ENCODE measurements at regions of chr11 and their contacts with region 1.

Region 1: GRCh38 chr11:64040684-64041322 is 5.1 kb downstream of the FLRT1 start:
- DNase-seq: no peak
- ATAC-seq: peak; percentile 62
- H3K4me3 ChIP-seq: no peak overlapping the region
- H3K27ac ChIP-seq: no peak overlapping the region
- H3K4me1 ChIP-seq: peaks cover 4% of the 10 kb centered on the region
- H3K27me3 ChIP-seq: no peaks in the 10 kb centered on the region
- CTCF ChIP-seq: peak; percentile 89; the same call in 1 of the 2 replicates

Region 2: DNA sequence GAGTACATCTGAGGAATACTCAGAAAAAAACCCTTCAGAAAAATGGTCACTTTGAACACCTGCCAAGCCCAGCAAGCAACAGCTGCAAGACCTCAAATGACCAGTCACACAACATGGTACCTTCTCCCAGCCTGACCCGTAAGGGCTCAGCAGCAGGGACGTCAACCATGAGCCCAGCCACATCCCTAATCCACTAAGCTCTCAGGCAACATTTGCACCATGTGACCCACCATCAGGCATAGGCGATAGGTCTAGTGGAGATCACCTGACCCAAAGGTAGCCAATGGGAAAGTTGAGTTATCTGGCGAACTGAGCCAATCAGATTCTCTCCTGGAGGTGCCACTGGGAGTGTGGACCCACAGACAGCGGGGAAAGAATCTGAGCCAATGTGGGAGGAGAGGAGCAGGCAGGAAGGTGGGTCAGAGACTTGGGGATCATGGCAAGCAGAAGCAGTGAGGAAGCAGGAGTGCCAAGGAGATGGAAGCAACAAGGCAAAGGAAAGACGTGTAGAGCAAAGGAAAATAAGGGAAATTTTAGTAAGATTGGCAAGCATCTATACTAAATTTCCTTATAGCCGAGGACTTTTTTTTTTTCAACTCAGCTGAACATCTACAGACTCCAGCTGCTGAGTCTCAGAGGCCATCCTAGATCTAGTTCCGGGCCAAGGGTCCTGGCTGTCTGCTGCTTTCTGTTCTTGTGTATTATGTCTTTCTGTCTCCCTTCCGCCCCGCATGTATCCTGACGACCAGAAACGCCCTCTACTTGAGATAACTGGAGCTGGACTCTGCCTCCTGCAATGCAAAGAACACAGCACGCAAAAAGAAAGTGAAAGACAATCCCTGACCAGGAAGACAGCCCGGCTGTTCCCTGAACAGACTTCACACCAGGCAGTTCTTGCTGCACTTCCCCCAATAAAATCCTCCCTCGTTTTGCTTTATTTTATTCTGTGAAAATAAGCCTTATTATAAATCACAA is 466.6 kb before region 1 on chr11:
- CTCF ChIA-PET with region 1: no interaction called
- POLR2A ChIA-PET with region 1: no interaction called
- in situ Hi-C with region 1: no loop called
- intact Hi-C with region 1: no loop called
- DNase-seq: no peak
- ATAC-seq: peak; percentile 92
- H3K4me3 ChIP-seq: peak overlapping the region; percentile 19 to 44; a peak in 3 of 4 replicates
- H3K27ac ChIP-seq: peak overlapping the region; percentile 62
- H3K4me1 ChIP-seq: peaks cover 7% of the 10 kb centered on the region
- H3K27me3 ChIP-seq: no peaks in the 10 kb centered on the region; the same call in 1 of the 2 replicates
- CTCF ChIP-seq: no peak

Region 3: DNA sequence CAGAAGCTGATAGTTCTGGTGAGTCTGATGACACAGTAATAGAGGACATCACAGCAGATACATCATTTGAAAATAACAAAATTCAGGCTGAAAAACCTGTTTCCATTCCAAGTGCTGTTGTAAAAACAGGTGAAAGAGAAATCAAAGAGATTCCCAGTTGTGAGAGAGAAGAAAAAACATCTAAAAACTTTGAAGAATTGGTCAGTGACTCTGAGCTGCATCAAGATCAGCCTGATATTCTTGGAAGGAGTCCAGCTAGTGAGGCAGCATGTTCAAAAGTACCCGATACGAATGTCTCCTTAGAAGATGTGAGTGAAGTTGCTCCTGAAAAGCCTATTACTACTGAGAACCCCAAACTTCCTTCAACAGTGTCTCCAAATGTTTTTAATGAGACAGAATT is 320.8 kb before region 1 on chr11:
- CTCF ChIA-PET with region 1: no interaction called
- POLR2A ChIA-PET with region 1: no interaction called
- in situ Hi-C with region 1: no loop called
- intact Hi-C with region 1: no loop called
- DNase-seq: no peak
- ATAC-seq: no peak
- H3K4me3 ChIP-seq: no peak overlapping the region
- H3K27ac ChIP-seq: no peak overlapping the region
- H3K4me1 ChIP-seq: no peaks in the 10 kb centered on the region
- H3K27me3 ChIP-seq: no peaks in the 10 kb centered on the region
- CTCF ChIP-seq: no peak

Region 4: GRCh38 chr11:64146036-64146962 is 105.5 kb after region 1 on chr11:
- CTCF ChIA-PET with region 1: interaction called, 12 read pairs
- POLR2A ChIA-PET with region 1: no interaction called
- in situ Hi-C with region 1: no loop called
- intact Hi-C with region 1: loop called (anchors 2 kb)
- DNase-seq: no peak
- ATAC-seq: peak; percentile 75
- H3K4me3 ChIP-seq: no peak overlapping the region
- H3K27ac ChIP-seq: no peak overlapping the region
- H3K4me1 ChIP-seq: peaks cover 15% of the 10 kb centered on the region
- H3K27me3 ChIP-seq: no peaks in the 10 kb centered on the region
- CTCF ChIP-seq: peak; percentile 95